ENCODE measurements at regions of chr16 and their contacts with region 1.

Region 1: DNA sequence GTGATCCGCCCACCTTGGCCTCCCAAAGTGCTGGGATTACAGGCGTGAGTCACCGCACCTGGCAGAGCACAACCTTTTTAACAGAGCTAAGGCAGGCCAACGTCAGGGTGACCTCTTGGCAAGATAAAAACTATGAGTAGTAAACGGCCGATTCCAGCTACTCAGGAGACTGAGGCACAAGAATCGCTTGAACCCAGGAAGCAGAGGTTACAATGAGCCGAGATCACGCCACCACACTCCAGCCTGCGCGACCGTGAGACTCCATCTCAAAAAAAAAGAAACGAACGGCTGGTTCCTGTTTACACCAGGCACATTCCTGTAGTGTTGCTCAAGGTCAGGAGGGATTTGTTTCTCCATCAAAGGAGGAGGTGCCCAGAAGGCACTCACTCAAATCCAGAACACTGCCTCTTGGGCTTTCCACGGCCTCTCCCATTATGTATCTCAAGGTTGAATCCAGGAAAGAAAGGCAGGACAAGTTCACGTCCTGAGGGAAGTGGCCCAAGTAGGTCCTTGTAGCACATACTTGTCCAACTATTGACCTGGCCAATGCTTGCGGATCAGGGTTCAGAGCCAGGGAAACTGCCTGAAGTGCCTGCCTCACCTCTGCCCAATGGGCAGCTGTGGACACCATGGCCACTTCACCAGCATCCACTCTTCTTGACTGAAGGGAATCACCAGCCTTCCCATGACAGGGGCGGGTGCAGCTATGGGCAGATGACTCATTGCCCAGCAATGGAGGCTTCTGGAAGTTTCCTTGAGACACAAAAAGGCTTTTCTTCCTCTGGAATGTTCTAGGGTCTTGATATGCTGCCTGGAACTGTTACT is 13.5 kb downstream of the KNOP1 start:
- DNase-seq: peak in 1 of 2 experiments; percentile 38
- H3K4me3 ChIP-seq: no peak overlapping the region
- H3K27ac ChIP-seq: no peak overlapping the region
- H3K4me1 ChIP-seq: peaks cover 11% of the 10 kb centered on the region
- H3K27me3 ChIP-seq: no peaks in the 10 kb centered on the region
- CTCF ChIP-seq: no peak

Region 2: DNA sequence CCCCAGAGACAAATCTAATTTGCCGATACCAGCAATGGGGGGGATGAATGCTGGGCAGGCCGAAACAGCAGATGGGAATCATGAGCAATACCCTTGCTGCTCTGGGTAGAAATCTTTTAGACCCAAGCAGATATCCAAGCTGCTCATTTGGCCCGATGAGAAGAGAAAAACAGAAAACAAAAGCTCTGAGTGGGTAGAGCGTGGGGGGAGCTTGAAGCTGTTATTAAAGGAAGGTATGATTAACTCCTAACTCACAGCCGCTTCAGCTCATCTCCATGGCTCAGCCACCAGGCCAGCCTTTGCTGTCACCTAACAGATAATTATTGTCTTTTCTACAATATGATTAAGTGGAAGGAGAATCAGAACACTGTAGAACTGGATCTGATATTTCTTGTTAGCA is 90.7 kb before region 1 on chr16:
- CTCF ChIA-PET with region 1: no interaction called
- POLR2A ChIA-PET with region 1: interaction called, 13 read pairs
- intact Hi-C with region 1: no loop called
- DNase-seq: no peak
- H3K4me3 ChIP-seq: no peak overlapping the region
- H3K27ac ChIP-seq: no peak overlapping the region
- H3K4me1 ChIP-seq: 0 out of 2 replicates have a peak, but pooled peaks cover 6% of the 10 kb centered on the region
- H3K27me3 ChIP-seq: no peaks in the 10 kb centered on the region
- CTCF ChIP-seq: no peak

Region 3: GRCh38 chr16:19860166-19861041 is 155.9 kb after region 1 on chr16:
- CTCF ChIA-PET with region 1: no interaction called
- POLR2A ChIA-PET with region 1: interaction called, 14 read pairs
- intact Hi-C with region 1: no loop called
- DNase-seq: no peak
- H3K4me3 ChIP-seq: no peak overlapping the region
- H3K27ac ChIP-seq: no peak overlapping the region
- H3K4me1 ChIP-seq: no peaks in the 10 kb centered on the region
- H3K27me3 ChIP-seq: no peaks in the 10 kb centered on the region
- CTCF ChIP-seq: no peak

Measured in PC-9 (cell line).